Activated CD8-positive, alpha-beta T cell treated with anti-CD3 and anti-CD28 coated beads for 36 hours (primary cell): ENCODE measurements at regions of chr2 and their contacts with region 1.

Region 1: DNA sequence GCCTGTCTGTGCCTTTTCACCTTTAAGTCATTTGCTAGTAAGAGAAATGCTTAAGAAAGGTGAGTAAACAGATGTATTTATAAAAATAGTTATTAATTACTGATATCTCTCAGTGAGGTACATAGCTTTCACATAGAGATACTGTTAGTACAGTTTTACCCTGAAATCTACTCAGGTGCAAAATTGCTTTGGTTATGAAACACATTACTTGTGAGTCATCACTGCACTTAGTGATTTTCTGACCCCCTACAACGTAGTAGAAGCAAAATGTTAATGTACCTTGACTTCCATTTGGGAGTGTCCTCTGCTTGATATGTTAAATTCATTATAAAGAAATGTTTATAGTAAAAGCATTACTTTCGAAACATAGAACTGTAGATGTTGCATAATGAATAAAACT is 6.5 kb downstream of the GLS start:
- DNase-seq: no peak
- ATAC-seq: peak; percentile 59
- H3K4me3 Mint-ChIP-seq: peak overlapping the region; percentile 49
- H3K27ac Mint-ChIP-seq: no peak overlapping the region
- H3K4me1 Mint-ChIP-seq: peaks cover 64% of the 10 kb centered on the region
- H3K27me3 Mint-ChIP-seq: no peaks in the 10 kb centered on the region
- CTCF ChIP-seq: no peak

Region 2: GRCh38 chr2:190911813-190912212 is 24.7 kb after region 1 on chr2:
- CTCF ChIA-PET with region 1: no interaction called
- POLR2A ChIA-PET with region 1: interaction called, 8 read pairs
- intact Hi-C with region 1: loop called (anchors 2 kb)
- DNase-seq: peak; percentile 18
- ATAC-seq: peak; percentile 91
- H3K4me3 Mint-ChIP-seq: no peak overlapping the region
- H3K27ac Mint-ChIP-seq: no peak overlapping the region
- H3K4me1 Mint-ChIP-seq: peaks cover 56% of the 10 kb centered on the region
- H3K27me3 Mint-ChIP-seq: no peaks in the 10 kb centered on the region
- CTCF ChIP-seq: no peak